Endothelial cell of umbilical vein (primary cell): ENCODE measurements at regions of chr1 and their contacts with region 1.

Region 1: DNA sequence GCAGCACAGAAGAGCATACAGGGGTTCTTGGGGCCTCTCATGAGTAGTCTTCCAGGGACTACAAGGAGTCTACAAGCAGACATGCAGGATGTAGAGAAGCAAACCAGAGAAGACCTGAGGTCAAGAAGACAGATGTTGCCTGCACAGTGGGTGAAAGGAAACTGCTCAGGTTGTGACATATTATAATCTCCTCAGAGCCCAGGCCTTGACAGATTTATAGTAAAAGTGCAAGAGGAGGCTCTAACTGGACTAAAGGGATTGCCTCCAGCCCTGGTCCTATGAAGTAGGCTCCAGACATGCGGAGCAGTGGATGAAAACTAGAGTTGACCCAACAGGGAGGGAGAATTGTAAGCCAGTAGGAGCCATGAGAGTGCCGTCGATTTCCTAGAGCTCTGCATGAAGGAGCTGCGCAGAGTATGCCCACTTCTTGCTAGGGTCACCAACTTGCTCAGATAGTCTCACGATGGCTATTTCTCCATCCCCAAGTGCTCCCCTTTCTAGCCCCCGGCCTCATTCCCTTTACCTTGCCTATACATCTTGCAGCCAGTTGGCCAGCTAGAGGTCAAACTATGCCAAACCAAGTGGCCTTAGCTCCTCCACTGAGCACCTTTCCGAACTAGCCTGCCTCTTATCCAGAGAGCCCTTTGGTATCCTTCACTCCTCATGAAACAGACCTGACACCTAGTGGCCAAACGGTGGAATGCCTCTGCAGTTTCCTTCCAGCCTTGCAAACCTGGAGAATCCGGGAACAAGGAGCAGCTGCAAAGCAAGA is 36.2 kb upstream of the IPO9 start:
- DNase-seq: peak; percentile 86
- H3K4me3 ChIP-seq: no peak overlapping the region
- H3K27ac ChIP-seq: peak overlapping the region; percentile 76
- H3K4me1 ChIP-seq: peaks cover 51% of the 10 kb centered on the region
- H3K27me3 ChIP-seq: no peaks in the 10 kb centered on the region
- CTCF ChIP-seq: peak; percentile 90 to 97
- POLR2A ChIP-seq: peak; percentile 54

Region 2: DNA sequence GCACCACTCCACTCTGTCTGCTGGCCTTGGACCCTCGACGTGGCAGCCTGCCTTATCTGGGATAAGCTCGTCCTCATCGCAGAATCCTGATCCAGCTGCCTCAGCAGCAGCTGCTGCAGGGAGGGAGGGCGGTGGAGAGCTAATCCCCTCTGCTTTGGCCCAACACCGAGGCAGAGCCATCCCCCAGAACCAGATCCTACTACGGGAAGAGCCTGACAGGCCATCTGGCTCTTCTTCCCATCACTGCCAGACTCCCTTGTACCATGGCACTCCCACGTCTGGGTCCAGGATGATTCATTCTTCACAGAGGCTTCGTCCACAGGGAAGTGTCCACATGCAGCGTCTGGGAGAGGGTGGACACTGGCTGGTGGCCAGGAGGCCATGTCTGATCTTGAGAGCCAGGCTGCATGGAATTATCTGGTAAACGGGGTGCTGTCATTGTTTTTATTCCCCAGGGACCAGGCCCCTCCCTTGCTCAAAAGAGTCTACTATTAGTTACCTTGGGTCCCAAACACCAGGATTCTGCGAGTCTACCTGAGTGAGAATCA is 524.0 kb before region 1 on chr1:
- CTCF ChIA-PET with region 1: no interaction called
- POLR2A ChIA-PET with region 1: no interaction called
- dilution Hi-C with region 1: no loop called
- intact Hi-C with region 1: no loop called
- DNase-seq: no peak
- H3K4me3 ChIP-seq: no peak overlapping the region
- H3K27ac ChIP-seq: no peak overlapping the region
- H3K4me1 ChIP-seq: no peaks in the 10 kb centered on the region
- H3K27me3 ChIP-seq: peaks cover 0 to 4% of the 10 kb centered on the region in 2 experiments
- CTCF ChIP-seq: no peak
- POLR2A ChIP-seq: no peak

Region 3: GRCh38 chr1:201538612-201539551 is 253.8 kb before region 1 on chr1 and contains the start of gene NAV1:
- CTCF ChIA-PET with region 1: interaction called, 16 read pairs
- POLR2A ChIA-PET with region 1: no interaction called
- dilution Hi-C with region 1: no loop called
- intact Hi-C with region 1: no loop called
- DNase-seq: peak; percentile 84
- H3K4me3 ChIP-seq: peak within 1 kb of the TSS; percentile 70 to 90 (median 85)
- H3K27ac ChIP-seq: peak within 1 kb of the TSS; percentile 93
- H3K4me1 ChIP-seq: peaks cover 74% of the 10 kb centered on the region
- H3K27me3 ChIP-seq: no peaks in the 10 kb centered on the region
- CTCF ChIP-seq: no peak
- POLR2A ChIP-seq: peak; percentile 85
- total RNA-seq, gene NAV1: 136 and 138 TPM in 2 replicates

Region 4: GRCh38 chr1:201637680-201638079 is 155.0 kb before region 1 on chr1:
- CTCF ChIA-PET with region 1: interaction called, 5 read pairs
- POLR2A ChIA-PET with region 1: no interaction called
- dilution Hi-C with region 1: no loop called
- intact Hi-C with region 1: loop called (anchors 5 kb)
- DNase-seq: no peak
- H3K4me3 ChIP-seq: no peak overlapping the region
- H3K27ac ChIP-seq: peak overlapping the region; percentile 91
- H3K4me1 ChIP-seq: peaks cover 56% of the 10 kb centered on the region
- H3K27me3 ChIP-seq: no peaks in the 10 kb centered on the region
- CTCF ChIP-seq: no peak
- POLR2A ChIP-seq: no peak

Region 5: DNA sequence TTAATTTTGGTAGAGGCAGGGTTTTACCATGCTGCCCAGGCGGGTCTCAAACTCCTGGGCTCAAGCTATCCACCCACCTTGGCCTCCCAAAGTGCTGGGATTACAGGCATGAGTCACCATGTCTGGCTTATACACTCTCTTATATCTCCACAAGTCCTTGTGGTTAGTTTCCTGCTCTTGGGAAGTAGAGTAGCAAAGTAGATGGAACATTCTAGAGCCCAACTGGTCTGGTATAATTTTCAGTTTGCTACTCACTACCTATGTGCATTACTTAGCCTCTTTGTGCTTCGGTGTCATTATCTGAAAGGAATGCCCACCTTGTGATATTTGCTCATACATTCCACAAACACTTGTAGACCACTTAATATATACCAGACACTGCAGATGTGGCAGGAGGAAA is 60.4 kb before region 1 on chr1:
- CTCF ChIA-PET with region 1: interaction called, 15 read pairs
- POLR2A ChIA-PET with region 1: no interaction called
- dilution Hi-C with region 1: no loop called
- intact Hi-C with region 1: no loop called
- DNase-seq: no peak
- H3K4me3 ChIP-seq: no peak overlapping the region
- H3K27ac ChIP-seq: no peak overlapping the region
- H3K4me1 ChIP-seq: peaks cover 3% of the 10 kb centered on the region
- H3K27me3 ChIP-seq: no peaks in the 10 kb centered on the region
- CTCF ChIP-seq: no peak
- POLR2A ChIP-seq: no peak

Region 6: GRCh38 chr1:201748335-201748734 is 44.4 kb before region 1 on chr1:
- CTCF ChIA-PET with region 1: interaction called, 39 read pairs
- POLR2A ChIA-PET with region 1: no interaction called
- dilution Hi-C with region 1: no loop called
- intact Hi-C with region 1: loop called (anchors 1 kb)
- DNase-seq: peak; percentile 84
- H3K4me3 ChIP-seq: no peak overlapping the region
- H3K27ac ChIP-seq: peak overlapping the region; percentile 99
- H3K4me1 ChIP-seq: peaks cover 64% of the 10 kb centered on the region
- H3K27me3 ChIP-seq: no peaks in the 10 kb centered on the region
- CTCF ChIP-seq: no peak
- POLR2A ChIP-seq: peak; percentile 46

Region 7: DNA sequence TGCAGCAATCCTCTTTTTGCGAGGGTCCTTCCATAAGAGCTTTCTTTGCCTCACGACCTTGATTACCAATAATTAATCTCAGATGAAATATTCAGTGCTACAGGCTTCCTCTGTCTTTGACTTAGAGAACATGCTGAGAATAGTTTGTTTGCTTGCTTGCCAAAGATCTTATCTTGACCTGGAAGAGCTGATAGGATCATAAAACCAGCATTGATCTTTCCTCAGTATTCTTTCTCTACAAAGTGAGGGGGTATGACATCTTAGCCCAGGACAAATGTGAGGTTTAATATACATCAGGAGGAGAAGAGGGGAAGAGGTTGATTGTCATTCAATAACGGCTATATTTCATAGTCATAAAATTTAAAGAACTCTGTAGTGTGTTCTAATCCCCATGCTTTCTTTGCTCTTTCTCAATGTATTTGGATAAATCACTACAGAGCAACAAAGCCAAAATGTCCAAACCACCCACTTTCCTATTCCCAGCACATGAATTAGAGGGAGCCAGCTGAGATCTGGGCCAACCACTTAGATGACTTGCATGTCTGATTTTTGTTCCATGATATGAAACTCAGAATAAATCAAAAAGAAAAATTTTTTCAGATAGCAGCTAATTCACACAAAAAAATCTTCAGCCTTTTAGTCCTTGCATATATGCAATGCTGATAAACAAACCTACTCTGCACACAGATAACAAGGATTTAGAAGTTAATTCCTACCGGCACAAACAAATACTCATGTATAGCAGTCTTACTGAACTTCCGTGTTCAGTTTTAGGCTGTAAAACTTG is 14.2 kb before region 1 on chr1:
- CTCF ChIA-PET with region 1: interaction called, 53 read pairs
- POLR2A ChIA-PET with region 1: interaction called, 5 read pairs
- dilution Hi-C with region 1: no loop called
- intact Hi-C with region 1: loop called (anchors 2 kb)
- DNase-seq: no peak
- H3K4me3 ChIP-seq: no peak overlapping the region
- H3K27ac ChIP-seq: no peak overlapping the region
- H3K4me1 ChIP-seq: peaks cover 54% of the 10 kb centered on the region
- H3K27me3 ChIP-seq: no peaks in the 10 kb centered on the region
- CTCF ChIP-seq: no peak
- POLR2A ChIP-seq: no peak